ENCODE measurements at regions of chr17 and their contacts with region 1.

Region 1: DNA sequence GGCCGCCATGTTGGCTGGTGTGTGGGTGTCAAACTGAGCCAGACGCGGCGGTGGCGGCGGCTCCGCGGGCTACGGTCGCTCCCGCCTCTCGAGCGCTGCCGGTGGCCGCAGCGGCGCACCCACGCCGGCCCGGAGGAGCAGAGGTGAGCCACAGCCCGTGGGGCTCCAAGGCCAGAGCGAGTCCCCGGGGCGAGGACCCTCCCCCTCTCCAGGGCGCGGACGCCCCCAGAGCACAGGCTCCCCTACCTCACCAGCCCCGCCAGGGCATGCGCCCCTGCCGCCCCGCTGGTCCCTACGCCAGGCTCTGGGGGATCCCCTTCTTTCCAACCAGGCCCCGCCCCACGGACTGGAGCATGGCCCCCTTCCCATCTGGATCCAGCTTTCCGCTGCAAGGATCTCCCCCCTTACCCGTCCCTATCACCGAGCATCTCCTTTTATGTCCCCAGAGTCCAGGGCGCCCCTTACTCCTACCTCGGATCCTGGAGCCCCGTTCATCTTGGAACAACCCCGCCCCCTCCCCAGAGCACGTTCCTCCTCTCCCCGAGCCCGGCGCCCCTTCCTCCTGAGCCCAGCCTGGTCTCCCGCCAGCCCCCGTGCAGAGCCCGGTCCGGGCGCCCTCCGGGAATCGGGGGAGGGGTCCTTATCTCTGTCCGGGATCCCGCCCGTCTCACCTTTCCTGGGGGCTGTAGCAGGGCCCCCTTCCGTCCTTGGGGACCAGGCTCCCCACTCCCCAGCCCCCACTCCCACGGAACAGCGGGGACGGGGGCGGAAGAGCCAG is 412 bp downstream of the EPN2 start:
- DNase-seq: peak; percentile 78
- H3K4me3 ChIP-seq: peak overlapping the region; percentile 96 to 99
- H3K27ac ChIP-seq: peak overlapping the region; percentile 54 to 83; a peak in 3 of 4 replicates
- H3K4me1 ChIP-seq: peaks cover 4 to 15% of the 10 kb centered on the region in 2 experiments; a peak in 3 of 4 replicates
- H3K27me3 ChIP-seq: no peaks in the 10 kb centered on the region
- CTCF ChIP-seq: peak; percentile 25; the same call in 1 of the 2 replicates
- EP300 ChIP-seq: no peak
- RAD21 ChIP-seq: no peak

Region 2: DNA sequence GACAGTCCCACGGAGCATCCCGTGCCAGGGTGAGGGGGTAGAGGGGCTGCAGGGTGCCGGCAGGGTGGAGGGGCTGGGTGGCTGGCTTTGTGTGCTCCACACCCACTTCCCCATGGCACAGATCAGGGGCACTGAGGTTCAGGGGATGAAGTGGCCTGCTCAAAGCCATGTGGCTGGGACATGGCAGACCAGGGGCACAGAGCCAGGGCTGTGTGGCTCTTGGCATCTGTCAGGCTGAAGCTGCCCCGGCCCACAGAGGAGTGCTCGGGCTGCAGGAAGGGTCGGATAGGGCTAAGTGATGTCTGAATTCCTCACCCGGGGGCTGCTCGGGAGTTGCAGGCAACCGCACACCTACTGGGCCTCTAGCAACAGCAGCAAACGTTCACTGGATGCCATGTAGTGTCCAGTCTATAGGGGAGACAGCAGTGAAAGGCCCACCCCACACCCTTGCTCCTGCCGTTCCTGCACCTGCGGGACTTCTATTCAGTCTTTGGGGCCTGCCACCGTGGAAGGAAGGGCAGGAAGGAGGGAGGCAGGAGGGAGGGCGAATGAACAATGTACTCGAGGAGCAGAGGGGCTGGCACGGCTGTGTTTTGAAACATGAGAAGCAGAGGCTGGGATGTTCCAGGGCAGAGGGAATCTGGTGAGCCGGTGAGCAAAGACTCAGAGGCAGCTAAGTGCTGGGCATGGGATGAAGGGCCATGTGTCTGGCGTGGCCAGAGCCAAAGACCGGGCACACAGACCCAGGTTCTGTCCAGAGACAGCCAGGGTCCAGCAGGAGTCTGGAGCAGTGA is 270.6 kb before region 1 on chr17:
- CTCF ChIA-PET with region 1: no interaction called
- POLR2A ChIA-PET with region 1: no interaction called
- DNase-seq: no peak
- H3K4me3 ChIP-seq: no peak overlapping the region
- H3K27ac ChIP-seq: peak overlapping the region; percentile 13 to 50; a peak in 1 of 4 replicates
- H3K4me1 ChIP-seq: peaks cover 4 to 26% of the 10 kb centered on the region in 2 experiments; a peak in 2 of 4 replicates
- H3K27me3 ChIP-seq: no peaks in the 10 kb centered on the region
- CTCF ChIP-seq: no peak
- EP300 ChIP-seq: no peak
- RAD21 ChIP-seq: no peak

Region 3: GRCh38 chr17:19248928-19249574 is 11.5 kb after region 1 on chr17:
- CTCF ChIA-PET with region 1: interaction called, 10 read pairs
- POLR2A ChIA-PET with region 1: no interaction called
- DNase-seq: no peak
- H3K4me3 ChIP-seq: no peak overlapping the region
- H3K27ac ChIP-seq: peak overlapping the region; percentile 28 to 47; a peak in 3 of 4 replicates
- H3K4me1 ChIP-seq: peaks cover 20 to 29% of the 10 kb centered on the region in 2 experiments; a peak in 2 of 4 replicates
- H3K27me3 ChIP-seq: no peaks in the 10 kb centered on the region
- CTCF ChIP-seq: no peak
- EP300 ChIP-seq: peak in 1 of 2 experiments; percentile 40; a peak in 1 of 4 replicates
- RAD21 ChIP-seq: no peak

Measured in SK-N-SH (cell line).